ENCODE measurements at regions of chr15 and their contacts with region 1.

Region 1: GRCh38 chr15:70466895-70467529 is 296.3 kb downstream of the UACA start:
- DNase-seq: peak; percentile 29
- ATAC-seq: peak; percentile 89
- H3K4me3 ChIP-seq: no peak overlapping the region
- H3K27ac ChIP-seq: no peak overlapping the region
- H3K4me1 ChIP-seq: no peaks in the 10 kb centered on the region
- H3K27me3 ChIP-seq: peaks cover 0 to 5% of the 10 kb centered on the region in 2 experiments; a peak in 2 of 5 replicates
- CTCF ChIP-seq: peak; percentile 73
- EP300 ChIP-seq: no peak
- POLR2A ChIP-seq: no peak
- RAD21 ChIP-seq: no peak

Region 2: DNA sequence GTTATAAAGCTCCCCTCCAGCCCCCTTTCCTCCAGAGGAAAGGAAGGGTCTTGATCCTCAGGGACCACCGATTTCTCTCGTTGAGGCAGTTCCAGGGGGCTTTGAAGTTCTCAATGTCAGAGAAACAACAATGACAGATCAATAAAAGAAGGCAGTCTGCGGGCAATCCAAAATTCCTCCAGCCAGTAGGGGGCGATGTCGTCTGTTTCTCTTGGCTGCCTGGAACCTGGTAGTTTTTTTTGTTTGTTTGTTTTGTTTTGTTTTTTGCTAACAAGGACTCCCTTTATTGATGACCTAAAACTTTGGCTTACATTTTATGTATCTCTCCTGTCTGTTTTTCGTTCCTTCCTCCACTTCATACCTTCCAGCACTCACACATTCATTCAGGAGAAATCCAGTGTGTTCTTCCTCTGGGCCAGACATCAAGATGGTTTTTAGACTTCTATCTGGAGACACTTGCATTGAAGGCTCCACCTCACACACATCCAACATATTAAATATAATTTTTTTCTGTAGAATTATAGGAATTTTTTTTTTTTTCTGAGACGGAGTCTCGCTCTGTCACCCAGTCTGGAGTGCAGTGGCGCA is 737.8 kb before region 1 on chr15:
- CTCF ChIA-PET with region 1: no interaction called
- POLR2A ChIA-PET with region 1: no interaction called
- in situ Hi-C with region 1: no loop called
- intact Hi-C with region 1: loop called (anchors 10 kb)
- DNase-seq: no peak
- ATAC-seq: no peak
- H3K4me3 ChIP-seq: no peak overlapping the region
- H3K27ac ChIP-seq: no peak overlapping the region
- H3K4me1 ChIP-seq: no peaks in the 10 kb centered on the region
- H3K27me3 ChIP-seq: peaks cover 0 to 19% of the 10 kb centered on the region in 2 experiments; a peak in 3 of 5 replicates
- CTCF ChIP-seq: peak; percentile 67
- EP300 ChIP-seq: no peak
- POLR2A ChIP-seq: no peak
- RAD21 ChIP-seq: 0 out of 2 replicates have a peak, but pooled peaks have one; percentile 40

Region 3: GRCh38 chr15:70488002-70488605 is 21.1 kb after region 1 on chr15:
- CTCF ChIA-PET with region 1: no interaction called
- POLR2A ChIA-PET with region 1: no interaction called
- in situ Hi-C with region 1: no loop called
- intact Hi-C with region 1: no loop called
- DNase-seq: peak; percentile 29
- ATAC-seq: peak; percentile 66
- H3K4me3 ChIP-seq: no peak overlapping the region
- H3K27ac ChIP-seq: no peak overlapping the region
- H3K4me1 ChIP-seq: no peaks in the 10 kb centered on the region
- H3K27me3 ChIP-seq: peaks cover 0 to 20% of the 10 kb centered on the region in 2 experiments; a peak in 3 of 5 replicates
- CTCF ChIP-seq: peak; percentile 88
- EP300 ChIP-seq: no peak
- POLR2A ChIP-seq: no peak
- RAD21 ChIP-seq: peak; percentile 52